Ascending aorta (tissue), 2 donors: ENCODE measurements at regions of chr3 and their contacts with region 1.

Region 1: DNA sequence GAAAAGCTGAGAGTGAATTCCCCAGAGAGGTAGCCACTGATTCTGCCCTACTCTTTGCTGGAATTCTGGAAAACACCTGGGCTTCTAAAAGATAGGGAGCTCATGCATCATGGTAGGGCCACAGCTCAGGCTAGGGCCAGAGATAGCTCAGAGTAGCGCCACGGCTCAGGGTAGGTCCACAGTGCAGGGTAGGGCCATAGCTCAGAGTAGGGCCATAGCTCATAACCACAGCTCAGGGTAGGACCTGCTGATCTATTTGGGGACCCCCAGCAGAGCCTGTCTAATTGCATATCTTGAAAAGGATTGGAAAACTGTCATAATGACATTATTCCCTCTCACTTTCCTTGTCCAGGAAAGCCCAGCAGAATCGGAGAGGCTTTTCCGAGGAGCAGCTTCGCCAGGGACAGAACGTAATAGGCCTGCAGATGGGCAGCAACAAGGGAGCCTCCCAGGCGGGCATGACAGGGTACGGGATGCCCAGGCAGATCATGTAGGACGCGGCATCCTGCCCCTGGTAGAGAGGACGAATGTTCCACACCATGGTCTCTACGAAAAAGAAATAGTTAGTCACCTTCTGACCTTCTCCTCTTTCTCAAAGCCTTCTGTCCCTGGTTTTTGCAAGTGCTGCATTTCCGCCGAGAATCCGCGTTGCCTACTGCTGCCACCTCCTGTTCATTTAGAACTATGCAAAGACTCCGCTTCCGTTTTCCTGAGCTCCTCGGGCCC is 14.5 kb downstream of the TAGLN3 start:
- DNase-seq: peak in 1 of 2 donors; percentile 79
- H3K4me3 ChIP-seq: peak overlapping the region in 1 of 2 donors; percentile 33
- H3K27ac ChIP-seq: no peak overlapping the region
- H3K4me1 ChIP-seq: peaks cover 0 to 2% of the 10 kb centered on the region in 2 donors
- H3K27me3 ChIP-seq: no peaks in the 10 kb centered on the region
- CTCF ChIP-seq: peak; percentile 47 to 84 (median 65)

Region 2: GRCh38 chr3:111910806-111911205 is 102.4 kb before region 1 on chr3:
- intact Hi-C with region 1: no loop called
- DNase-seq: no peak
- H3K4me3 ChIP-seq: no peak overlapping the region
- H3K27ac ChIP-seq: peak overlapping the region; percentile 54 to 65
- H3K4me1 ChIP-seq: peaks cover 0 to 16% of the 10 kb centered on the region in 2 donors
- H3K27me3 ChIP-seq: no peaks in the 10 kb centered on the region
- CTCF ChIP-seq: no peak

Region 3: DNA sequence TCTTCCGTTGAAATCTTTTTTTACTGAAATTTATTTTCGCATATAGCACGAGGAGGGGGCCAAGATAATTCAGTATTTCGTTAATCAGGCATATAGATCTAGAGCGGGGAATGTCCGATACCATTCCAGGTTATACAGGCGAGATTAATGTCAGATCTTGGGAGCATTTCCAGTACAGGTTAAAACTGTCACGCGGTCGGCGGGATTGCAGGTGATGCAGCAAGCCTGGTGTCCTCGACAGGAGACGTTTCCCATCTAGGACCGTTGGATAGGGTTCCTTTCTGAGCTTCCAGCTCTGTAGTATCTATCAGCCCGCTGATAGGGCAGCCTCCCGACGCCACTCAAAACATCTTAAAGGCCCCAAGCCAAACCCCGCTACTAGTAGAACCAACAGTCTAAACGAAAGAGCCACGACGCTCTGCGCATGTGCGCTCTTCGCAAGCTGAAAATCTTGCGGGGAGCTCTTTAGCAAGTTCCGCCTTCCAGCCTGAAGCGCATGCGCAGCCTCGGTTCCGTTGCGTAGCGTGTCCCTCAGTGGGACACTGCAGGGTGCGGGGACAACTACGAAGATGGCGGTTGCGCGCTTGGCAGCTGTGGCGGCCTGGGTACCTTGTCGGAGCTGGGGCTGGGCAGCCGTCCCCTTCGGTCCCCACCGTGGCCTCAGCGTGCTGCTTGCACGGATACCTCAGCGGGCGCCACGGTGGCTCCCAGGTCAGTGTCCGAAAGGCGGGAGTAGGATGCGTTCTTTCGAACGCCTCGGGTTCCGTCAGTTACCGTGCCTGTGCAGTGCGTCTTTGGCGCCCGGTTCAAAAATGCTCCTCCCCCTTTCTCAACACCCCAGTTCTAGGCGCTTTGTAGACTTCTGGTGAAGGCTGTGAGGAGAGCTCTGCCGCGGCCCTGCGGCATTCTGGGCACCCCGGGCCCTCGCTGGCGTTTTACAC is 34.5 kb before region 1 on chr3 and contains the start of gene ABHD10:
- intact Hi-C with region 1: loop called (anchors 5 kb)
- DNase-seq: peak; percentile 76 to 97
- H3K4me3 ChIP-seq: peak within 1 kb of the TSS; percentile 79 to 89
- H3K27ac ChIP-seq: peak within 1 kb of the TSS; percentile 67 to 76
- H3K4me1 ChIP-seq: peaks cover 0 to 9% of the 10 kb centered on the region in 2 donors
- H3K27me3 ChIP-seq: no peaks in the 10 kb centered on the region
- CTCF ChIP-seq: no peak
- total RNA-seq, gene ABHD10: 18.6 TPM

Region 4: GRCh38 chr3:111989061-111989678 is 24.1 kb before region 1 on chr3:
- intact Hi-C with region 1: loop called (anchors 2 kb)
- DNase-seq: no peak
- H3K4me3 ChIP-seq: no peak overlapping the region
- H3K27ac ChIP-seq: no peak overlapping the region
- H3K4me1 ChIP-seq: no peaks in the 10 kb centered on the region
- H3K27me3 ChIP-seq: no peaks in the 10 kb centered on the region
- CTCF ChIP-seq: peak; percentile 44 to 66 (median 50)